ENCODE measurements at regions of chr4 and their contacts with region 1.

Region 1: GRCh38 chr4:121370729-121371325 is 10.0 kb downstream of the QRFPR start:
- DNase-seq: no peak

Region 2: DNA sequence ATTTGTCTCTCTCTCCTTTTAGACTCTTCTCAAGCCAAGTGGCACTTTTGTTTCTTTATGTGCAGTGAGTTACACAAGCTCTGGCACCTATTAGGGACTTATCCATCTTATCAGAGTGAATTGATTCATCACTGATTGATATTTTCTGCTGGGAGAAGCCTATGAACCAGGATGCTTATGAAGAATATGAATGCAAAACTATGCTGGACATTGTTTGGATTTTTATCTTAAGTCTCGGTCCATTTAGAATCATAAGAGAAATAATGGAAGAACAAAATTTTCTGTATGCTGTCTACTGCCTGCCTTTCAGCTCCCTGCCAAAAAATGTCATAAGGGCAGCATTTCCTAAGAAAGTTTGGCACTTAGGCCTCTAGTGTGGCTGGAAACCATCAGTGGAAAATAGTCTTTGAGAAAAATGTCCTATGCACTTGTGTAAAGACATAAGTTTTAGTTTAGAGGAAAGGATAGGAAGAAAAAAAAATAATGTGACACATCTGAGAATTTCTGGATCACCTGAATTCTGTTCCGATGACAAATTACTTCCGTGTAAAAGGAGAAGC is 938.4 kb before region 1 on chr4:
- intact Hi-C with region 1: no loop called
- DNase-seq: no peak

Region 3: DNA sequence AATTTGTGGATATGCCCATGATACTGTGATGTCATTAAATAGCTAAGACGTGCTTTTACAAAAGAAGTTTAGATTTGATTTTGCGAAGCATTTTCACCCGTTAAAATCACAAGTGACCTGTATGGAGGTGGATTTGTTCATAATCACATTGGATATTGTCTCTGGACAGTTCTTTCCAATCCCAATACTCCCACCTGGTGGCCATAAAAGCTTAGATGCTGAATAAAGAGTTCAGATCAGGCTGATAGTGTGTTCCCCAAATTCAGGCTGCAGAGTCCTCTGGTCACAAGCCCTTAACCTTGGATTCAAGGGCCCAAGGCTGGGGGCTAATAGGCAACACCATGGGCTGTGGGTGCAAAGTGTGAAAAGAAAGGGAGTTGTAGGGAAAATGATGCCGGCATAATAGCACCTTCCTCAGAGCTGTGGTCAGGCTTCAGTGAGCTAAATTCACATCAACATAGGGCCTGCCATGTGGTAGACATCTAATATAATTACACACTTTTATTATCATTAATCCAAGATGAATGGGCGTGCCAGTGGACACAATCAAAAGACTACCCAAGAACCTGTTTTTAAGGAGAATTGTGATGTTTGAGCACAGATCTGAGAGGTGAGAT is 366.0 kb after region 1 on chr4:
- intact Hi-C with region 1: loop called (anchors 5 to 10 kb)
- DNase-seq: no peak

Measured in posterior vena cava (tissue), 2 donors.